A549 (cell line): ENCODE measurements at regions of chr15 and their contacts with region 1.

Region 1: DNA sequence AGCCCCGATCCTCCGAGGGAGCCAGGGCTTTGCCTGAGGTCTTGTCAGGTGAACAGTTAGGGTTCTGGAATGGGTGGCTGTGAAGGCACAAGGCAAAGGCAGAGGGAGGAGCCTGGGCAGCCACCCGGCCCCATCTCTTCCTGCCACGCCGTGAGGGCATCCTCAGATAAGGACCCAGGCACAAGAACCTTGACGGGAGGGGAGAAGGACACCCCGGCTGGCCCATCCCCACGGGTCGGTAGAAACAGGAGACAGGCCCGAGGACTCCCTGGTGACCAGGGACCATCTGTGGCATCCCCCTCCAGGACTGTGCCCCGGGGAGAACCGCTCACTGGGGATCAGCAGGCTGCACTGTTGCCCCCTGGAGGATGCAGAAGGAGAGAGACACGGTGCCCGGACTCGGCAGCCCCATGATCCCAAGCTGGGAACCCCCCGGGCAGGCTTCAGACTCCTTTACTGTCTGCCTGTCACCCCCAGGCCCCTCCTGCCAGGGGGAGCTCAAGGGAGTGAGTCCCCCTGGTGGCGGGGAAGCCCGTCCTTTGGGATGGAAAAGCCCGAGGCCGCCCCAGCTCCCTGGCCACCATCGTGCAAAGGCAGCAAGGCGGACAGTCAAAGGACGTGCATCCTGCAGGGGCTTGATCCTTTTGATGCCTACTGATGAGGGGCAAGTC is 12.3 kb upstream of the PCSK6 start:
- DNase-seq: peak; percentile 51 to 87
- ATAC-seq: peak; percentile 92 to 98
- H3K4me3 ChIP-seq: no peak overlapping the region
- H3K27ac ChIP-seq: peak overlapping the region; percentile 51 to 54; a peak in 5 of 6 replicates
- H3K4me1 ChIP-seq: 0 out of 3 replicates have a peak, but pooled peaks cover 6% of the 10 kb centered on the region
- CTCF ChIP-seq: peak; percentile 76
- EP300 ChIP-seq: no peak
- POLR2A ChIP-seq: no peak
- RAD21 ChIP-seq: peak; percentile 65 to 67

Region 2: GRCh38 chr15:101294731-101295606 is 206.9 kb before region 1 on chr15 and contains the start of gene SNRPA1:
- CTCF ChIA-PET with region 1: interaction called, 98 read pairs
- POLR2A ChIA-PET with region 1: interaction called, 3 read pairs
- DNase-seq: peak; percentile 97 to 98
- ATAC-seq: peak; percentile 83 to 91
- H3K4me3 ChIP-seq: peak within 1 kb of the TSS; percentile 95
- H3K27ac ChIP-seq: peak within 1 kb of the TSS; percentile 91 to 97
- H3K4me1 ChIP-seq: peaks cover 36% of the 10 kb centered on the region
- CTCF ChIP-seq: no peak
- EP300 ChIP-seq: no peak
- POLR2A ChIP-seq: peak; percentile 80
- RAD21 ChIP-seq: no peak
- polyA plus RNA-seq, gene SNRPA1: 127 and 177 TPM in 2 replicates

Region 3: DNA sequence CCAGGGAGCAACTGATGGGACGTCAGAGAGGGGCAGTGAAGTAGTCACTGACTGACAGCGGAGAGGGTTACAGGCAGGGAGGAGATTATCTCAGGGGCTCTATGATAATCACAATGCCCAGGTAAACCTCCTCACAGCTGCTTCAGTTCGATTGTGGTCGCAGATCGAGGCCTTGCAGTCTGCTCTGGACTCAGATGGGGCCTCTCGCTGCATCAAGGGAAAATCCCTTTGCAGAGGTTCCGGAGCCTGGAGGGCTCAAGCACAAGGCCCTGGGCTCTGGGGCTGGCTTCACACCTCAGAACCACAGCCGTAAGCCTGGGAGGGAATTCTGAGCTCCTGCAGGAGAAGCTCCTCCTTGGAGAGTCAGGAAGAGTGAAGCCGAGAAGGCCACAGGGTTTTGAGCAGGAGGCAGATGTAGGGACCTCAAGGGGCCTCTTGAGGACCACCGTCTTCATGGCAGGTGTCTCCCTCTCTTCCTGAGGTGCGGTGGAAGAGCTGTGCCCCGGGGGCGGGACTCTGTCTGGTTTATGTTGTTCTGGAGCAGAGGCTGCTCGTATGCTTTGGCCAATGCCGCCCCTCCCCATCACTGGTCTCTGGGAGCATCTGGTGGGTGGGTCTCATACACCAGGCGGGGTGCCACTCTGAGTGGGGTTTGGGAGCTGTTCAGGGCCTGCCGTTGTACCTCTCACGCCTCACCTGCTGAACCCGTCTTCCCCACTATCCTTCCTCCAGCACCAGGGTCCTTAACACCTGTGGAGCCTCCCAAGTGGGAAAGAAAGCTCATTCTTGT is 187.3 kb before region 1 on chr15:
- CTCF ChIA-PET with region 1: interaction called, 15 read pairs
- POLR2A ChIA-PET with region 1: no interaction called
- DNase-seq: no peak
- ATAC-seq: no peak; a peak in 1 of 6 replicates
- H3K4me3 ChIP-seq: no peak overlapping the region
- H3K27ac ChIP-seq: no peak overlapping the region
- H3K4me1 ChIP-seq: no peaks in the 10 kb centered on the region
- CTCF ChIP-seq: no peak
- EP300 ChIP-seq: no peak
- POLR2A ChIP-seq: no peak
- RAD21 ChIP-seq: no peak

Region 4: DNA sequence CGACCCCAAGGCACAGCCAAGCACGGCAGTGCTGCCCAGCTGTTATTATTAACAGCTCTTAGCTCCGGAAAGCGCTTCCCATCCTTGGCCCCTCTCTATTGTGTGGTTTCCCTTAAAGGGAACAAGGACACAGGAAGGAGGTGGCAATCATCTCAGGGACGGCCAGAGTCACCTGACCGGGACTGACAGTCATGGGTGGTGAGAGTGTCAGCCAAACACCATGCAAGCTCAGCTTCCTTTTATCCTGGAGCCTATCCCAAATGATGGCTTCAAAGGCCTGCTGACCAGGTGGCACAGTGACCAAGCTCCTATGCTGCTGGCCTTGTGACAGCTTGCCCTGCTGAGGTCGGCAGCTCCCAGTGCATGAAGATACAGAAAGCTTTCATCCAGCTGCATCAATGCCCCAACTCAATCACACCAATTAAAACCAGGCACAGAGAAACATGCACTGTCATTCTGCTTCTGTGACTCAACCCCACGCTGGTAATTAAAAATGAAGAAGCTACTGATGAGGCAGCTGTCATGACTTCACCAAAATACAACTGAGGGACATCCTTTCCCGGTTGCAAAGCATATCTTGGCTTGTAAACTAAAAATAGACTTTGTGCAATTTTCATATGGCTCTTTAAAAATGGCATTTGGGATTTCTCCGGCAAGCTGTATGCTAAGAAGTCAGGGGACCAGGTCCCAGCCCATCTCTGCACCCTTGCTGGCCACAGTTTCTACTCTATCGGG is 46.4 kb before region 1 on chr15:
- CTCF ChIA-PET with region 1: interaction called, 13 read pairs
- POLR2A ChIA-PET with region 1: no interaction called
- DNase-seq: no peak
- ATAC-seq: no peak; a peak in 1 of 6 replicates
- H3K4me3 ChIP-seq: no peak overlapping the region
- H3K27ac ChIP-seq: no peak overlapping the region
- H3K4me1 ChIP-seq: 0 out of 3 replicates have a peak, but pooled peaks cover 5% of the 10 kb centered on the region
- CTCF ChIP-seq: no peak
- EP300 ChIP-seq: no peak
- POLR2A ChIP-seq: no peak
- RAD21 ChIP-seq: no peak

Region 5: DNA sequence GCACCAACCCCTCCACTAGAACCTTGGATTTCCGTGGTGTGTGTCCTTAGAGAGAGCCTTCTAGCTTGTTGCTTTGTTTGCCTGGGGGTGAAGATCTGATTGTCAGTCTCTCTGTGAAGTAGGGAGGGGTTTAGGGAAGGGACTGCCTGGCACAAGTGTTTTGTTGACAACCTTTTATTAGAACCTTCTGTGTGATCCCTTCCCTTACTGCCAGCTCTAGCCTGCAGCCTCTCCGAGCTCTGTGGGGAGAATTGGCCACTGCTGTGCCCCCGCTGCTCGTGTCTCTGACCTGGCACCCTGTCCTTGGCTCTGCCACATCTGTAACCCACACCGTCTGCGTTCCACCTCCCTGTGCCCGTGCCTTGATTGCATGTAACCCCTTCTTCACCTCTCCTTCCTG is 18.6 kb after region 1 on chr15:
- CTCF ChIA-PET with region 1: interaction called, 14 read pairs
- POLR2A ChIA-PET with region 1: no interaction called
- DNase-seq: no peak
- ATAC-seq: no peak
- H3K4me3 ChIP-seq: no peak overlapping the region
- H3K27ac ChIP-seq: no peak overlapping the region
- H3K4me1 ChIP-seq: no peaks in the 10 kb centered on the region
- CTCF ChIP-seq: no peak
- EP300 ChIP-seq: no peak
- POLR2A ChIP-seq: no peak
- RAD21 ChIP-seq: no peak